SK-MEL-5 (cell line): ENCODE measurements at regions of chr5 and their contacts with region 1.

Region 1: DNA sequence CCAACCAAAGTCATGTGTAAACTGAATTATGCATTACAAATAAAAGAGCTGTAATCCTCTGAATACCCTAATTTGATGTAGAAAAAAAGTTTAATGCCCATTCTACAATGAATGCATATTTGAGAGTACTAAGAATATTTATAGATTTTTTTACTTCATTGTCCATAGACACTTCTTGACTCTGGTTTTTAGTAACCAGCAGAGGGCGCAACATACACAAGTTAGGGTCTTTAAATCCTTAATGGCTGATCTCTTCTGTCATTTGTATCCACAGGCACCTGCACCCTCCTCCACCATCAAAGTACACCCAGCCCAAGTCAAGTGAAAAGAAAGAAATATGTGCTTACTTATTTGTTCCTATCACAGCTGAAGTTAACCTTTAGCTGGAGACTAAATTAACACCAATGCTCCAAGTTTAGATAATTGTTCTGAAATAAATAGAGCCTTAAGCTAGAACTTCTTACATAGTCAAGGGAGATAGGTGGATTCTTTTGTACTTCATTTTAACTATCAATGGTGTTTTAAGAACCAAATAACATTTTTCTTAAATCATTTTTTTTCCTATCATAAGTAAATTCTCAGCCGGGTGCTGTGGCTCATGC is 524.2 kb upstream of the DAB2 start:
- DNase-seq: peak; percentile 91

Region 2: DNA sequence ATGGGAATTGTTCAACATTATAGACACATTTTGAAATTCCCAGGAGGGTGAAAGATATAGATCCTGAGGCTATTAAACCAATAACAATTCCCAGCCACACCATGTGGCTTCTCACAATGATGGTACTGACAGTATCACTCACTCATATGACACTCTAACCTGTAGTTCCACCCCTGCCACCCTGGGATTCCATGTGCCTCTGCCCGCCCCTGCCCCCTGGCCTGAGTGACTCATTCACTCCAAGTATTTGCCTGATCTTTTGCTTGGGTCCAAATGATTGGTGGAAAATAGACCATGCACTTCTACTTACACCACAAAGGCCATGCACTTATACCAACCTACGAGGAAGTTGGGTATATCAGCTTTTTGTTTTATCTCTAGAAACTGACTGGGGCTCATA is 219.0 kb before region 1 on chr5:
- in situ Hi-C with region 1: loop called (anchors 25 kb)
- DNase-seq: peak; percentile 76

Region 3: DNA sequence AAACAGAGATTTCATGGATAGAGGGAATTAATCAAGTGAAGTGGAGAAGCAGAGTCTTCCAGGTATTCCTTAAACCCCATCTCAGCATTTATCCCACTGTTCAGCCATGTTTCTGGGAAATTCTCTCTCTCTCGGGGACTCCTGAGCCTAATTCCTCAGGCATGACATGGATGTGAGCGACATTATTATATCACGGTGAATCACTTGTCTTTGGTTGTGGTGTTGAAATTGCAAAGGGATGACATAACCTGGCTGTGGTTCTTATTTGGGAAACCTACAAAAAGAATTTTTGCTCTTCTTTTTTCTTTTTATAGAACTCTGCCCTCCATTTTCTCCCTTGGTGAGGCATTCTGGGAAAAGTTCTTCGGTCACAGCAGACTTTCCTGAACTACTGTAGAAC is 272.8 kb after region 1 on chr5:
- in situ Hi-C with region 1: no loop called
- DNase-seq: no peak